Left lung (tissue), 14 donors: ENCODE measurements at regions of chr12 and their contacts with region 1.

Region 1: GRCh38 chr12:10153271-10154144 is 18.4 kb downstream of the OLR1 start:
- DNase-seq: peak; percentile 80 to 92 (median 82)
- ATAC-seq: peak; percentile 97
- H3K4me3 ChIP-seq: peak overlapping the region; percentile 47 to 55
- H3K27ac ChIP-seq: peak overlapping the region; percentile 57 to 84
- H3K4me1 ChIP-seq: peaks cover 0 to 25% of the 10 kb centered on the region in 2 donors
- H3K27me3 ChIP-seq: no peaks in the 10 kb centered on the region
- CTCF ChIP-seq: peak; percentile 70 to 72

Region 2: GRCh38 chr12:10058387-10058786 is 95.1 kb before region 1 on chr12:
- intact Hi-C with region 1: no loop called
- DNase-seq: no peak
- ATAC-seq: no peak
- H3K4me3 ChIP-seq: no peak overlapping the region
- H3K27ac ChIP-seq: no peak overlapping the region
- H3K4me1 ChIP-seq: no peaks in the 10 kb centered on the region
- H3K27me3 ChIP-seq: no peaks in the 10 kb centered on the region
- CTCF ChIP-seq: no peak

Region 3: GRCh38 chr12:10190558-10191388 is 37.3 kb after region 1 on chr12:
- intact Hi-C with region 1: loop called in 1 of 2 experiments (anchors 5 kb)
- DNase-seq: peak in 2 of 4 donors; percentile 53 to 72
- ATAC-seq: peak; percentile 97
- H3K4me3 ChIP-seq: no peak overlapping the region
- H3K27ac ChIP-seq: no peak overlapping the region
- H3K4me1 ChIP-seq: peaks cover 7 to 16% of the 10 kb centered on the region in 2 donors
- H3K27me3 ChIP-seq: peaks cover 0 to 6% of the 10 kb centered on the region in 2 donors
- CTCF ChIP-seq: peak; percentile 66 to 74